ENCODE measurements at regions of chr13 and their contacts with region 1.

Region 1: DNA sequence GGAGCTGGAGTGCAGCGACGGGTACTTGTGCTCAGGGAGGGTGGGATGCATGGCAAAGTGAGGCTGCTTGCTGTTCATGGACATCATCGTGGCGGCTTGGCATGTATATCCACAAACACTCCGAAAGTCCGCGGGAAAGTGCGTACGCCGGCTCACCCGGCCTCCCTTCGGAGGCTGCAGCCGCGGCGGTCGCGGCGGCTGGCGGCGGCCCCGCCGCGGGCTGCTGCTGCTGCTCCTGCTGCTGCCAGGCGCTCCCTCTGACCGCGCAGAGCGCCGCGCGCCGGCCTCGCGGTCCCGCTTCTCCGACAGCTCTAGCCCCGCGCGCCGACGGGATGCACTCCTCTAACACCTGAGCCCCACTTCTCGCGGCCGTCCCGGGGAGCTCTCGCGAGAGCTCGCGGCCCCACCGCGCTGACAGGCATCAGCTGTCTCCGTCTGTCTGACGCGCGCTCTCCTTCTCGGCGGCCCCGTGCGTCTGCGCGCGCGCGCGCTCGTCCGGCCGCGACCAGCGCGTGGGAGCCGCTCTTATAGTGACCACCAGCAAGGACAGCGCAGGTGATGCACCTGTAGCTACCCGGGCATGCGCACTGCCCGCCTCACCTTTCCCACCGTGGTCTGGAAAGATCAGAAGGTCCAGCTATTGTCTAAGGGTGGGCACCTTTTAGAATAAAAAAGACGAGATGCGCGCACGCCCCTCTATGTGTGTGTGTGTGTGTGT is at the start of gene POU4F1:
- DNase-seq: peak; percentile 72
- ATAC-seq: peak; percentile 86
- H3K4me3 ChIP-seq: peak within 1 kb of the TSS; percentile 55 to 71 (median 69)
- H3K27ac ChIP-seq: no peak within 1 kb of the TSS
- H3K4me1 ChIP-seq: peaks cover 33% of the 10 kb centered on the region
- H3K27me3 ChIP-seq: peaks cover 3 to 57% of the 10 kb centered on the region in 2 experiments
- CTCF ChIP-seq: no peak; the same call in 1 of the 2 replicates
- EP300 ChIP-seq: no peak
- POLR2A ChIP-seq: peak in 1 of 2 experiments; percentile 49; a peak in 1 of 4 replicates
- RAD21 ChIP-seq: no peak
- total RNA-seq, gene POU4F1: 0.74 and 1.1 TPM in 2 replicates

Region 2: DNA sequence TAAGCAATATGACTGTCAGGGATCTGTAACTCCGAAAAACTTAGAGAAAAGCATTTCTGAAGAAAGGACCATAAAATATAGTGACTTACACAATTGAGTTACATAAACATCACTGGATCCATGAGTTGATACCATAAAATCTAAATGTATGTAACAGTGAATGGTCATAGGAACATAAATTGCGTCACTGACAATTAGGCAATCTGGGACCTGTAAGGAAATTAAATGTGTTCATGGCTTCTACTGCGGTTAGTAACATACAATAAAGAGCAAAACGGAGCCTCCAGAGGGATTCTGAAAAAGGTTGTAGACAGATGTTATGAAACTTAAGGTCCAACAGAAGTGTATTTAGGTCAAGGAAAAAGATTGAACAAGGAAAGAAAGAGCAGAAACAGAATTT is 27.1 kb before region 1 on chr13:
- CTCF ChIA-PET with region 1: no interaction called
- POLR2A ChIA-PET with region 1: no interaction called
- in situ Hi-C with region 1: no loop called
- intact Hi-C with region 1: no loop called
- DNase-seq: no peak
- ATAC-seq: no peak
- H3K4me3 ChIP-seq: no peak overlapping the region
- H3K27ac ChIP-seq: no peak overlapping the region
- H3K4me1 ChIP-seq: no peaks in the 10 kb centered on the region
- H3K27me3 ChIP-seq: no peaks in the 10 kb centered on the region
- CTCF ChIP-seq: no peak
- EP300 ChIP-seq: no peak
- POLR2A ChIP-seq: no peak
- RAD21 ChIP-seq: no peak

Region 3: DNA sequence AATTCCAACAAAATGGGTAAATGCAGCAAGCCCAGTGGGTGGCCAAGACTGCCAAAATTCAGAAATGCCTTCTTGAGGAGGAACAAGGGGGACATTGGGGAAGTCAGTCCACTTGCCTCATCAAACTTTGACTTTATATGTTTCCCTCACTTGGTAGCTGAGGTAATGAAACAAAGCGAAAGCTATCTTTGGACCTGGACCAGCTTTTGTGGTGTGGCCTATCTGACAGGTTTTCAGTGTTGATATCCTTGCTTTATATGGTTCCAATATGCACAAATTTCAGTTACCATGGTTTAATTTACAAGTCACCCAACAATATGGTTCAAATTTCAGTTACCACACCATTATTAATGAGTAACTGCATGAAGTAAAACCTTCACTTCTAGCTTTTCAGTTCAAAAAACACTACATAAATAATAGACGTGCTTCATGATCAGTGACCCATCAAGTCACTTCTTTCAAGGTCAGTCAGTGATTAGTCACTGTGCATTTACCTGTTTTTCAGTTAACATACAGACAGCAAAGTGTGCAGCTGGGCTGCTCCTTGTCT is 17.6 kb after region 1 on chr13:
- CTCF ChIA-PET with region 1: no interaction called
- POLR2A ChIA-PET with region 1: no interaction called
- in situ Hi-C with region 1: no loop called
- intact Hi-C with region 1: no loop called
- DNase-seq: no peak
- ATAC-seq: no peak
- H3K4me3 ChIP-seq: no peak overlapping the region
- H3K27ac ChIP-seq: no peak overlapping the region
- H3K4me1 ChIP-seq: no peaks in the 10 kb centered on the region; the same call in 1 of the 2 replicates
- H3K27me3 ChIP-seq: no peaks in the 10 kb centered on the region
- CTCF ChIP-seq: no peak
- EP300 ChIP-seq: no peak
- POLR2A ChIP-seq: no peak
- RAD21 ChIP-seq: no peak

Region 4: GRCh38 chr13:78658635-78659449 is 55.4 kb after region 1 on chr13 and contains the start of gene OBI1:
- CTCF ChIA-PET with region 1: no interaction called
- POLR2A ChIA-PET with region 1: interaction called, 4 read pairs
- in situ Hi-C with region 1: no loop called
- intact Hi-C with region 1: loop called (anchors 1 kb)
- DNase-seq: peak; percentile 76
- ATAC-seq: peak; percentile 93
- H3K4me3 ChIP-seq: peak within 1 kb of the TSS; percentile 79 to 90 (median 90)
- H3K27ac ChIP-seq: peak within 1 kb of the TSS; percentile 90
- H3K4me1 ChIP-seq: peaks cover 17% of the 10 kb centered on the region
- H3K27me3 ChIP-seq: peaks cover 0 to 12% of the 10 kb centered on the region in 2 experiments; a peak in 2 of 5 replicates
- CTCF ChIP-seq: no peak
- EP300 ChIP-seq: no peak
- POLR2A ChIP-seq: peak; percentile 75 to 81
- RAD21 ChIP-seq: no peak
- total RNA-seq, gene OBI1: 23.5 and 38.8 TPM in 2 replicates

Region 5: DNA sequence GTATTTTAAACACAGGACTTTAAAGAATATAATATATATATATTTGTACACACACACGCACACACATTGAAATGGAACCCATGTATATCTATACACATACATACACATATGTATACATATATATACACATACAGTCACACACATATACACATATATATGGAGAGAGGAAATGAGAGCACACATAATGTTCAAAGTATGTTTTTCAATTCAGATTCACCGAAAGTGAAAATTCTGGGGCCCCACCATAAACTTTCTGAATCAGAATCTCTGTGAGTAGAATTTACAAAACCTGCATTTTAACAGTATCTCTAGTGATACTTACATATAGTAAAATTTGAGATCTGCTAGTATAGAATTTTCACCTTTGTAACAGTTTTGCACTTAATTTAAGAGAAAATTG is 116.0 kb after region 1 on chr13:
- CTCF ChIA-PET with region 1: no interaction called
- POLR2A ChIA-PET with region 1: no interaction called
- in situ Hi-C with region 1: no loop called
- intact Hi-C with region 1: no loop called
- DNase-seq: no peak
- ATAC-seq: no peak
- H3K4me3 ChIP-seq: no peak overlapping the region
- H3K27ac ChIP-seq: no peak overlapping the region
- H3K4me1 ChIP-seq: no peaks in the 10 kb centered on the region
- H3K27me3 ChIP-seq: peaks cover 0 to 2% of the 10 kb centered on the region in 2 experiments; a peak in 1 of 5 replicates
- CTCF ChIP-seq: no peak
- EP300 ChIP-seq: no peak
- POLR2A ChIP-seq: no peak
- RAD21 ChIP-seq: no peak